SK-N-SH (cell line): ENCODE measurements at regions of chr5 and their contacts with region 1.

Region 1: GRCh38 chr5:176810084-176810597 is at the start of gene UNC5A:
- DNase-seq: peak; percentile 91
- H3K4me3 ChIP-seq: peak within 1 kb of the TSS; percentile 53
- H3K27ac ChIP-seq: peak within 1 kb of the TSS in 1 of 2 experiments; percentile 70; a peak in 2 of 4 replicates
- H3K4me1 ChIP-seq: peaks cover 0 to 40% of the 10 kb centered on the region in 2 experiments; a peak in 1 of 4 replicates
- H3K27me3 ChIP-seq: peaks cover 17% of the 10 kb centered on the region
- CTCF ChIP-seq: no peak
- EP300 ChIP-seq: no peak
- RAD21 ChIP-seq: no peak
- polyA plus RNA-seq, gene UNC5A: 0.46 and 0.55 TPM in 2 replicates

Region 2: GRCh38 chr5:176536902-176537607 is 273.1 kb before region 1 on chr5 and contains the start of gene RNF44:
- CTCF ChIA-PET with region 1: no interaction called
- POLR2A ChIA-PET with region 1: no interaction called
- DNase-seq: peak; percentile 96
- H3K4me3 ChIP-seq: peak within 1 kb of the TSS; percentile 73 to 97
- H3K27ac ChIP-seq: peak within 1 kb of the TSS; percentile 87 to 96
- H3K4me1 ChIP-seq: peaks cover 19 to 47% of the 10 kb centered on the region in 2 experiments; a peak in 3 of 4 replicates
- H3K27me3 ChIP-seq: no peaks in the 10 kb centered on the region
- CTCF ChIP-seq: no peak
- EP300 ChIP-seq: 0 out of 4 replicates have a peak, but pooled peaks of 1 of the 2 experiments have one; percentile 41
- RAD21 ChIP-seq: no peak
- polyA plus RNA-seq, gene RNF44: 13.2 and 17.9 TPM in 2 replicates

Region 3: DNA sequence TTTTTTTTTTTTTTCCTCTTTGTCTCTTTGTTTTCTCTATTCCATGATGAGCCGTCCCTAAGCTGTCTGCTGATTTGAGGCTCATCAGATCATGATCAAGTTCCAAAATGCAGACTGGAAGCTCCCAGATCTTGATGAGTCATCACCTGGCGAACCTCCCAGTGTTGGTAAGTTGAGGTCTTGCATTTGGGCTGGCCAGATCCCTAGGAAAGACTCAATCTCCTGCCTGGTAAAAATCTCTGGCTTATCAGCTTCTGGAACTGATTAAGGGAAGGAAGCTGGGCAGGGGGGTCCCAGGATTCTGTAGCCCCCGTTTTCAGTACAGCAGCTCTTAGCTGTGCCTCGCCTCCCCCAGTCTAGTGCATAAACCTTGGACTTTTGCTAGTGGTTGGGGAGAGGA is 93.8 kb before region 1 on chr5:
- CTCF ChIA-PET with region 1: interaction called, 10 read pairs
- POLR2A ChIA-PET with region 1: no interaction called
- DNase-seq: peak; percentile 66
- H3K4me3 ChIP-seq: no peak overlapping the region
- H3K27ac ChIP-seq: no peak overlapping the region
- H3K4me1 ChIP-seq: peaks cover 8 to 9% of the 10 kb centered on the region in 2 experiments; a peak in 2 of 4 replicates
- H3K27me3 ChIP-seq: peaks cover 18% of the 10 kb centered on the region
- CTCF ChIP-seq: no peak
- EP300 ChIP-seq: peak; percentile 13 to 14; a peak in 1 of 4 replicates
- RAD21 ChIP-seq: no peak

Region 4: GRCh38 chr5:176837707-176838115 is 27.6 kb after region 1 on chr5:
- CTCF ChIA-PET with region 1: interaction called, 10 read pairs
- POLR2A ChIA-PET with region 1: interaction called, 4 read pairs
- DNase-seq: no peak
- H3K4me3 ChIP-seq: no peak overlapping the region
- H3K27ac ChIP-seq: peak overlapping the region in 1 of 2 experiments; percentile 87; a peak in 2 of 4 replicates
- H3K4me1 ChIP-seq: peaks cover 0 to 77% of the 10 kb centered on the region in 2 experiments; a peak in 2 of 4 replicates
- H3K27me3 ChIP-seq: peaks cover 4% of the 10 kb centered on the region; the same call in 1 of the 2 replicates
- CTCF ChIP-seq: no peak
- EP300 ChIP-seq: no peak
- RAD21 ChIP-seq: no peak

Region 5: GRCh38 chr5:176887252-176887849 is 77.2 kb after region 1 on chr5:
- CTCF ChIA-PET with region 1: interaction called, 19 read pairs
- POLR2A ChIA-PET with region 1: no interaction called
- DNase-seq: peak; percentile 32
- H3K4me3 ChIP-seq: no peak overlapping the region
- H3K27ac ChIP-seq: no peak overlapping the region
- H3K4me1 ChIP-seq: peaks cover 0 to 29% of the 10 kb centered on the region in 2 experiments; a peak in 2 of 4 replicates
- H3K27me3 ChIP-seq: no peaks in the 10 kb centered on the region; the same call in 1 of the 2 replicates
- CTCF ChIP-seq: no peak
- EP300 ChIP-seq: no peak
- RAD21 ChIP-seq: no peak; the same call in 1 of the 2 replicates